B cell (primary cell): ENCODE measurements at regions of chr18 and their contacts with region 1.

Region 1: DNA sequence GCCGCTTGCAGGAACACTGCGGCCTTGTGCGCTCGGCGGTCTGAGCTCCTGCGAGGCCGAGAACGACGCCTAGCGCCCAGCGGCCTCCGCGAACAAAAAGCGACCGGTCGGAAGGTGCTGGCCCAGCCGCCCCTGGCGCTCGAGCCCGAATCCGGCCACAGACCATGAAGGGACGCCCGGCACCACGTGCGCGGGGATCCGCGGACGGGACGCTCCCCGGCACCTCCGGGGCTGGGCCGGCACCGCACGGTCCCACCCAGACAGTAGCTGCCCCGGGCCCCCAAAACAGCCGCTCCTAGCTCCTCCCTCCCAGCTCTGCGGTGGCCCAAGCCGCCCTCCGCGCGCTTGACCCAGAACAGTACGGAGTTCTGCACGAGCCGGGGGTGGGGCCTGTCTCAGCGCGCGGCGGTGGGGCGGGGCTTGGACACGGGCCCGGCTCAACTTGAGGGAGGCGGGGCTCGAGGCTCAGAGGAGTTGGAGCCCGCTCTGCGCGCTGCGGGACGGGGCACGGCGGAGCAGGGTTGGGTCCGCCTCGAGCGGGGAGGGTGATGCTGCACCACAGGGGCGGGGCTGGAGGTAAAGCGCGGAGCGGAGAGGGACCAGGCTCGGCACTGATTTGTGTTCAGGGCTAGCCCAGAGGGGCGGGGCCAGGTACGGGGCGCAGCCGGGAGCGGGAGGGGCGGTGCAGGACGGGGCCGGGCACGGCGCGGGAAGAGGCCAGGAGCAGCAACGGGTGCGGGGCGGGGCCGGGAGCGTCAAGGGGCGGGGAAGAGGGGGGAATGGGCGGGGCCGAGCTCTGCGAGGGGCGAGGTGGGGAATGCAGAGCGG is 538 bp upstream of the IMPA2 start:
- DNase-seq: peak; percentile 97
- ATAC-seq: peak; percentile 87
- H3K4me3 ChIP-seq: peak overlapping the region; percentile 44 to 81 (median 68)
- H3K4me3 Mint-ChIP-seq: peak overlapping the region; percentile 90
- H3K27ac ChIP-seq: peak overlapping the region in 1 of 2 donors; percentile 23
- H3K27ac Mint-ChIP-seq: peak overlapping the region; percentile 86
- H3K4me1 ChIP-seq: peaks cover 5 to 15% of the 10 kb centered on the region in 2 donors
- H3K4me1 Mint-ChIP-seq: peaks cover 14% of the 10 kb centered on the region
- H3K27me3 ChIP-seq: no peaks in the 10 kb centered on the region
- H3K27me3 Mint-ChIP-seq: no peaks in the 10 kb centered on the region
- CTCF ChIP-seq: no peak

Region 2: GRCh38 chr18:11851146-11851805 is 129.5 kb before region 1 on chr18 and contains the start of gene CHMP1B:
- CTCF ChIA-PET with region 1: no interaction called
- POLR2A ChIA-PET with region 1: interaction called, 4 read pairs
- intact Hi-C with region 1: loop called (anchors 1 kb)
- DNase-seq: peak; percentile 98
- ATAC-seq: peak; percentile 94
- H3K4me3 ChIP-seq: peak within 1 kb of the TSS; percentile 85 to 100 (median 98)
- H3K4me3 Mint-ChIP-seq: peak within 1 kb of the TSS; percentile 100
- H3K27ac ChIP-seq: peak within 1 kb of the TSS; percentile 93 to 97
- H3K27ac Mint-ChIP-seq: peak within 1 kb of the TSS; percentile 99
- H3K4me1 ChIP-seq: peaks cover 28 to 31% of the 10 kb centered on the region in 2 donors
- H3K4me1 Mint-ChIP-seq: peaks cover 34% of the 10 kb centered on the region
- H3K27me3 ChIP-seq: no peaks in the 10 kb centered on the region
- H3K27me3 Mint-ChIP-seq: no peaks in the 10 kb centered on the region
- CTCF ChIP-seq: no peak
- total RNA-seq, gene CHMP1B: 52.2 and 55.4 TPM in 2 replicates

Region 3: DNA sequence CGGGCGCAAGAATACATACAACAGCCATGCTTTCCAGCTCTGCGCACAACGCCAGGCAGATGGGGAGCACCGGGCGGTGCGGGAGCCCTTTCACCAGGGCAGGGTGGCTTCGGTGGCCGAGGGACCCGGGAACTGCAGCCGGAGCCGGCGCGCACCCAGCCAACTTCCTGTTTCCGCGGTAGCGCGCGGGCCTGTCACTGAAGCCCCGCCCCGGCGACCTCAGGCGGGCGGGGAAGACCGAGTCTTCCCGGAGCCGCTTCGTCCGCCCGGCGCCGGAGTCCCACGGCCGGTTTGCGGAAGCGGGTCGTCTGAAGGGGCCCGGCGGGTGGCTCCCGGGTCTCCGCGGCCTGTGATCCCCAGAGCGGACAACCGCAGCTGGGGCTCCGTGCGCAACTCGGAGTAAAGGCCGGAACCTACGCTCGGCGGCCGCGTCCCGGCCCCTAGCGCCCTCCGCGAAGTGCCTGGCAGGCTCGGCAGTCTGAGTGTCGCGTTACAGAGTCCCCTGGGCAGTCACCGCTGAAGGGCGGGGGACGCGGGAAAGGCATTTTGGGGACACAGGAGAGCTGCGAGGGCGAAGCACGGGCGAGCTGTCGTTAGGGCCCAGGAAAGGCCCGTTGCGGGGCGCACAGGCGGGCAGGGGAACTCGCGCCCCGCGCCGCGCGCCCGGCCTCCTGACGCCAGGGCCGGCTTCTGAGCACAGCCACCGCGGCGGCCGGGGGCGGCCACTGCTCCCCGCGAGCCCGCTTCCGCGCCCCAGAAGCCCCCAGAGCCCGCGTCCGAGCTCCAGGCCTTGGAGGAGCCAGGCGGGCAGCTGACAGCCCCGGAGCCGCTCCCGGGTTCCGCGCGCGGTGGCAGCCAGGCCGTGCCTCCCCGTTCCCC is 72.3 kb before region 1 on chr18 and contains the start of gene MPPE1:
- CTCF ChIA-PET with region 1: no interaction called
- POLR2A ChIA-PET with region 1: no interaction called
- intact Hi-C with region 1: loop called (anchors 1 kb)
- DNase-seq: peak; percentile 94
- ATAC-seq: peak; percentile 92
- H3K4me3 ChIP-seq: peak within 1 kb of the TSS; percentile 75 to 96 (median 84)
- H3K4me3 Mint-ChIP-seq: peak within 1 kb of the TSS; percentile 93
- H3K27ac ChIP-seq: peak within 1 kb of the TSS; percentile 93 to 97
- H3K27ac Mint-ChIP-seq: peak within 1 kb of the TSS; percentile 94
- H3K4me1 ChIP-seq: peaks cover 13 to 18% of the 10 kb centered on the region in 2 donors
- H3K4me1 Mint-ChIP-seq: peaks cover 21% of the 10 kb centered on the region
- H3K27me3 ChIP-seq: no peaks in the 10 kb centered on the region
- H3K27me3 Mint-ChIP-seq: no peaks in the 10 kb centered on the region
- CTCF ChIP-seq: no peak
- total RNA-seq, gene MPPE1: 57.5 and 69.7 TPM in 2 replicates

Region 4: GRCh38 chr18:11995445-11996189 is 14.8 kb after region 1 on chr18:
- CTCF ChIA-PET with region 1: interaction called, 17 read pairs
- POLR2A ChIA-PET with region 1: no interaction called
- intact Hi-C with region 1: loop called (anchors 1 kb)
- DNase-seq: peak; percentile 74
- ATAC-seq: peak; percentile 86
- H3K4me3 ChIP-seq: no peak overlapping the region
- H3K4me3 Mint-ChIP-seq: peak overlapping the region; percentile 59
- H3K27ac ChIP-seq: no peak overlapping the region
- H3K27ac Mint-ChIP-seq: no peak overlapping the region
- H3K4me1 ChIP-seq: peaks cover 7 to 11% of the 10 kb centered on the region in 2 donors
- H3K4me1 Mint-ChIP-seq: peaks cover 12% of the 10 kb centered on the region
- H3K27me3 ChIP-seq: no peaks in the 10 kb centered on the region
- H3K27me3 Mint-ChIP-seq: no peaks in the 10 kb centered on the region
- CTCF ChIP-seq: peak; percentile 70

Region 5: DNA sequence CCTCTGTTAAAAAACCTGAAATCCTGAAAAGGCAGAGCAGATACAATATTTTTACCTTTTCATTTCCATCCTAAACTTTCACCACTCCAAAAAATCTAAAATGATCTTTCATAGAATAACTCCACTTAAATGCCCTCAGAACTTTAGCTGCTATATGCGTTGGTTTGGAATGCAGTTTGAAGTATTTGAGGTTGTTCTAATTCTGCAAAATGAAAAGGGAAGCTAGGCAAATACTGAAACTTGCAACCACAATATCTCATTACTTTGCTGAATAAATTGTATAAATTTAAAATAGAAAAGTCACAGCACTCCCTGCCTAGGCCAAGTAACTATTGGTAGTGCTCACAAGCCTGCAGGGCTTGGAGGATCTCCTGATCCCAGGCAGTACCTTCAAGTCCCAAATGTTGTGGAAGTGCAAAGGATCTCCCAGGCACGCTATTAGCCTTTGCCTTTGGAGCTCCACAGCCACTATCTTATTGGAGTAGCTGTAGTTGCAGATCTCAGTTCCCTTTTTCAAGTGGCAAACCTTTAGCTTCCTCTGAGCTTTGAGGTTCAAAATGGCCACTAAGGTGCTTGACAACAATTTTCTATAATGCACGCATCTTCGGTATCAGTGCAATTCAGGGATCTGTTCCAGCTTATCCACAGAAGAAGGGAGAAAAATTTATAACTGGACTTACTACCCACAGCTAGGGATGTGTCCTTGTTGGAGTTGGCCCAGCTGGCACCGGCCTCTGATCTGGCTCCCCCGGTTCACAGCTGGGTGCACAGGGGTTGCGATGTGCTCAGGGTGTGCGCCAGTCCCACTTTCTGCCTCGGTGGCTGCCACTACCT is 69.4 kb after region 1 on chr18:
- CTCF ChIA-PET with region 1: interaction called, 4 read pairs
- POLR2A ChIA-PET with region 1: interaction called, 7 read pairs
- intact Hi-C with region 1: loop called (anchors 1 kb)
- DNase-seq: peak; percentile 75
- ATAC-seq: peak; percentile 89
- H3K4me3 ChIP-seq: peak overlapping the region in 3 of 5 experiments; percentile 21 to 47 (median 26)
- H3K4me3 Mint-ChIP-seq: peak overlapping the region; percentile 75
- H3K27ac ChIP-seq: peak overlapping the region; percentile 12 to 41
- H3K27ac Mint-ChIP-seq: peak overlapping the region; percentile 76
- H3K4me1 ChIP-seq: peaks cover 36 to 49% of the 10 kb centered on the region in 2 donors
- H3K4me1 Mint-ChIP-seq: peaks cover 52% of the 10 kb centered on the region
- H3K27me3 ChIP-seq: no peaks in the 10 kb centered on the region
- H3K27me3 Mint-ChIP-seq: no peaks in the 10 kb centered on the region
- CTCF ChIP-seq: no peak

Region 6: DNA sequence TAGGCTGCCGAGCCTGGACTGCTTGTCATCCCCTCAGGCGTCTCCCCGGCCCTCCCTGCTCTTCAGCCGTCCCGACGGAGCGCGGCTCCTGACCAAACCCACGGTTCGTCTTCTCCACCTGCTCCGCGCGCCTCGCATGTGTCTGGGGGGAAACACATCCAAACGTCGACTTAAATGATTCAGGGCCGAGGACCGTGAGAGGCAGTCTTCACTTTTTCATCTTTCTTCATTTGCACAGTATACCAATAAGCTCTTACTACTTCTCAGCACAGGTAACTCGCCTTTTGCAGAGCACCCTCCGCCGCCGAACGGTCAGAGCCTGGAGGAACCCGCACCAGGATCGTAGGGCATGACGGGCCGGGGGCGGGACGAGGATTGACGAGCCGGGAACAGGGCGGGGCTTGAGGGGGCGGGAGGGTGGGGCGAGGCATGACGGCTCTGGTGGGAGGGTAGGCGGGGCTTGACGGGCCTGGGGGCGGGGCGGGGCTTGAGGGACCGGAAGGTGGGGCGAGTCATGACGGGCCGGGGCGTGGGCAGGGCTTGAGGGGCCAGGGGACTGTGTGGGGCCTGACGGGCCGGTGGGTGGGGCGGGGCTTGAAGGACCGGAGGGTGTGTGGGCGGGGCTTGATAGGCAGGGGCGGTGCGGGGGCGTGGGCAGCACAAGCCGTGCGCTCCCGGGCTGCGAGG is 966.7 kb after region 1 on chr18 and contains the start of gene SEH1L:
- CTCF ChIA-PET with region 1: no interaction called
- POLR2A ChIA-PET with region 1: no interaction called
- intact Hi-C with region 1: loop called (anchors 5 kb)
- DNase-seq: no peak
- ATAC-seq: peak; percentile 91
- H3K4me3 ChIP-seq: peak within 1 kb of the TSS; percentile 69 to 97 (median 75)
- H3K4me3 Mint-ChIP-seq: peak within 1 kb of the TSS; percentile 96
- H3K27ac ChIP-seq: peak within 1 kb of the TSS; percentile 88 to 89
- H3K27ac Mint-ChIP-seq: peak within 1 kb of the TSS; percentile 94
- H3K4me1 ChIP-seq: peaks cover 5 to 22% of the 10 kb centered on the region in 2 donors
- H3K4me1 Mint-ChIP-seq: peaks cover 29% of the 10 kb centered on the region
- H3K27me3 ChIP-seq: no peaks in the 10 kb centered on the region
- H3K27me3 Mint-ChIP-seq: no peaks in the 10 kb centered on the region
- CTCF ChIP-seq: no peak
- total RNA-seq, gene SEH1L: 46.4 and 48.1 TPM in 2 replicates